ENCODE measurements at regions of chrX and their contacts with region 1.

Region 1: GRCh38 chrX:148035380-148035779 is 54.2 kb downstream of the FMR1NB start:
- DNase-seq: no peak
- ATAC-seq: peak; percentile 73

Region 2: GRCh38 chrX:147911192-147912022 is 124.0 kb before region 1 on chrX and contains the start of gene FMR1:
- intact Hi-C with region 1: loop called (anchors 10 kb)
- DNase-seq: peak; percentile 96
- ATAC-seq: peak; percentile 98
- total RNA-seq, gene FMR1: 24.9 TPM